ENCODE measurements at regions of chr3 and their contacts with region 1.

Region 1: DNA sequence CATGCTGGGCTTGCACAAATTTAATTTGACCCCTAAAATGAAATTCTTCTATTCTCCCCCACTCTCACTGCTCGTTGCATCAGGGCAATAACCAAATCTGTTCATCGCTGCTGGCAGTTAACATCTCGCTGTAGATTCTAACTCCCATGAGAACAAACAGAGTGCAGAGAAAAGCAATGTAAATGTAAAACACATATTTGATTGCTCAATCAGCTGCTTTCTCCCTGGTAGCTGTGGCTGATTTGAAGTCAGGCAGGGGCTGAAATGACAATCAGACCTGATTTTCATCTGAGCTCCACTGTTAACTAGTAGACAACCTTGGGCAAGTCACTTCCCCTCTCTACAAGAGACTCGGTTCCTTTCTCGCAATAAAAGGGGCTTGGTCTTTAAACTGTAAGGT is 119.8 kb upstream of the CPNE4 start:
- DNase-seq: no peak
- ATAC-seq: no peak
- H3K4me3 Mint-ChIP-seq: no peak overlapping the region
- H3K27ac Mint-ChIP-seq: no peak overlapping the region
- H3K4me1 Mint-ChIP-seq: no peaks in the 10 kb centered on the region
- H3K27me3 Mint-ChIP-seq: peaks cover 9% of the 10 kb centered on the region

Region 2: DNA sequence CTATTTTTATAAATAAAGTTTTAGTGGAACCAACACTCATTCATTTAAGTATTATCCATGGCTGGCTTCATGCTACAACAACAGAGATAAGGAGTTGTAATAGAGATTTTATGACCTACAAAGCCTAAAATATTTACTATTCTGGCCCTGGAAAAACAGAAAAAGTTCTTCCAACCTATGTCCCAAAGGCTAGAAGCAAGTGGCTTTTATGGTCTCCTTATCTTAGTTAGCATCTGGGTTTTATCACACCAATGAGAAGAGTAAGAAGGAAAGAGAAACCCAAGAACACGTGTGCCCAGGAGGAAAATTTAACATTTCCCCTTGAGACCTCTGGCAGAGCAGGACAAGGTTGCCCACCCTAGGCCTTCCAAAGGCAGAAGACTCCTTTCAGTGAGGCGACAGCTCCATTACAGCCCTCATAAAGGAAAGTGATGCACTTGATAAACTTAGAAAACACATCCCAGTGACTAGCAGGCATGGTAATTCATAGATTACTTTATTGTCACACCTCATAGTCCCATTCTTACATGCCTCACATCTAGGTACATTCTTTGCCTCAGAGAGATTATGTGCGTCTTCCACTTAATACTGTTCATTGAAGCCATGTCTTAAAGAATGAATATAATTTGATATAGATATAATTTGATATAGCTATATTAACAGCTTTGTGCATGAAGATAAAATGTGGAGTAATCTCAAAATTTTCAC is 49.4 kb after region 1 on chr3:
- CTCF ChIA-PET with region 1: no interaction called
- POLR2A ChIA-PET with region 1: no interaction called
- intact Hi-C with region 1: loop called in 1 of 2 experiments (anchors 5 kb)
- DNase-seq: no peak
- ATAC-seq: no peak
- H3K4me3 Mint-ChIP-seq: no peak overlapping the region
- H3K27ac Mint-ChIP-seq: no peak overlapping the region
- H3K4me1 Mint-ChIP-seq: no peaks in the 10 kb centered on the region
- H3K27me3 Mint-ChIP-seq: peaks cover 5% of the 10 kb centered on the region

Region 3: DNA sequence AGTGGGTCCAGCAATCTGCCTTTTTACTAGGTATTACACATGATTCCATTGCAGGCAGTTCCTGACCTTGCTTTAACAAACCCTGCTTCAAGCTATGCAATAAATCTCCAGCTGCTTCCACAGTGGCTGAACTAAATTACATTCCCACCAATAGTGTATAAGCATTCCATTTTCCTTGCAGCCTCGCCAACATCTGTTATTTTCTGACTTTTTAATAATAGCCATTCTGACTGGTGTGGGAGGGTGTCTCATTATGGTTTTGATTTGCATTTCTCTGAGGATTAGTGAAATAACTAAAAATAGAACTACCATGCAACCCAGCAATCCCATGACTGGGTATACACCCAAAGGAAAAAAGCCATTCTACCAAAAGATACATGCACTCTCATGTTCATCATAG is 226.3 kb after region 1 on chr3:
- CTCF ChIA-PET with region 1: no interaction called
- POLR2A ChIA-PET with region 1: no interaction called
- intact Hi-C with region 1: no loop called
- DNase-seq: no peak
- ATAC-seq: no peak
- H3K4me3 Mint-ChIP-seq: no peak overlapping the region
- H3K27ac Mint-ChIP-seq: no peak overlapping the region
- H3K4me1 Mint-ChIP-seq: no peaks in the 10 kb centered on the region
- H3K27me3 Mint-ChIP-seq: peaks cover 7% of the 10 kb centered on the region

Measured in activated CD4-positive, alpha-beta T cell treated with anti-CD3 and anti-CD28 coated beads for 36 hours (primary cell).